A549 (cell line): ENCODE measurements at regions of chr19 and their contacts with region 1.

Region 1: GRCh38 chr19:38964738-38965137 is 10.8 kb downstream of the FBXO17 start:
- DNase-seq: no peak
- ATAC-seq: no peak
- H3K4me3 ChIP-seq: no peak overlapping the region
- H3K27ac ChIP-seq: no peak overlapping the region
- H3K4me1 ChIP-seq: peaks cover 21% of the 10 kb centered on the region
- CTCF ChIP-seq: no peak
- EP300 ChIP-seq: no peak
- POLR2A ChIP-seq: no peak
- RAD21 ChIP-seq: no peak

Region 2: GRCh38 chr19:38693380-38694223 is 271.1 kb before region 1 on chr19:
- CTCF ChIA-PET with region 1: no interaction called
- POLR2A ChIA-PET with region 1: no interaction called
- DNase-seq: peak; percentile 91 to 92
- ATAC-seq: peak; percentile 10 to 54
- H3K4me3 ChIP-seq: 0 out of 3 replicates have a peak overlapping the region, but pooled peaks have one; percentile 1
- H3K27ac ChIP-seq: peak overlapping the region; percentile 93 to 94
- H3K4me1 ChIP-seq: peaks cover 100% of the 10 kb centered on the region
- CTCF ChIP-seq: no peak
- EP300 ChIP-seq: peak; percentile 55 to 84; a peak in 3 of 5 replicates
- POLR2A ChIP-seq: no peak
- RAD21 ChIP-seq: 0 out of 5 replicates have a peak, but pooled peaks of 1 of the 2 experiments have one; percentile 8

Region 3: GRCh38 chr19:38908854-38909253 is 55.9 kb before region 1 on chr19:
- CTCF ChIA-PET with region 1: no interaction called
- POLR2A ChIA-PET with region 1: no interaction called
- DNase-seq: no peak
- ATAC-seq: no peak
- H3K4me3 ChIP-seq: no peak overlapping the region
- H3K27ac ChIP-seq: no peak overlapping the region
- H3K4me1 ChIP-seq: peaks cover 10% of the 10 kb centered on the region
- CTCF ChIP-seq: no peak
- EP300 ChIP-seq: no peak
- POLR2A ChIP-seq: no peak
- RAD21 ChIP-seq: no peak

Region 4: DNA sequence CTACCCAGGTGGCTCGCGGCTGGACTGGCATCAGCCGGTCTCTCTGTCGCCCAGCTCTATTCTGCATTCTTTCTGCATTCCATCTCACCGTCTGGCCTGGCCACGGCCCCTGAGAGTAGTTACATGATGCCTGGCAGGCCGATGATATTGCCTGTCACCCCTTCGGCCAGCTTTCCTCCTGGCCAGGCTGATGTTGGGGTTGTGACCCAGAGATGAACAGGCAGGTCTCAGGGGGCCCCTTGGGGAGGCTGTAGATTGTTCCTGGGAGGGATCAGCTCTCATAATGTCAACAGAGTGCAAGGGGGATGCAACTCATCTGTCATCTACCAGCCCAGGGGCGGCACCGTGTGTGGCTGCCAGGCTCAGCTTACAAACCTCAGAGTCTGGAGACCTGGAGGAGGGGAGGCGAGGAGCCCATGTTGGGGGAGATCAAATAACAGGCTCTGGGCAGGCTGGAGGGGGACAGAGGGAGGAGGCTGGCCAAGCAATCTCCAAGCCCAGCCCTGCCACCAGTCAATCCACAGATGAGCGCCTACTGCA is 24.4 kb after region 1 on chr19:
- CTCF ChIA-PET with region 1: interaction called, 344 read pairs
- POLR2A ChIA-PET with region 1: no interaction called
- DNase-seq: peak in 1 of 2 experiments; percentile 55
- ATAC-seq: peak; percentile 72 to 76
- H3K4me3 ChIP-seq: no peak overlapping the region
- H3K27ac ChIP-seq: peak overlapping the region; percentile 21 to 71; a peak in 3 of 6 replicates
- H3K4me1 ChIP-seq: peaks cover 37% of the 10 kb centered on the region
- CTCF ChIP-seq: no peak
- EP300 ChIP-seq: no peak
- POLR2A ChIP-seq: no peak
- RAD21 ChIP-seq: no peak

Region 5: GRCh38 chr19:39070888-39071287 is 106.2 kb after region 1 on chr19:
- CTCF ChIA-PET with region 1: interaction called, 23 read pairs
- POLR2A ChIA-PET with region 1: no interaction called
- DNase-seq: peak in 1 of 2 experiments; percentile 64
- ATAC-seq: peak; percentile 26 to 45; a peak in 4 of 6 replicates
- H3K4me3 ChIP-seq: no peak overlapping the region
- H3K27ac ChIP-seq: peak overlapping the region; percentile 60 to 72; a peak in 5 of 6 replicates
- H3K4me1 ChIP-seq: peaks cover 40% of the 10 kb centered on the region
- CTCF ChIP-seq: no peak
- EP300 ChIP-seq: peak in 1 of 2 experiments; percentile 48; a peak in 2 of 5 replicates
- POLR2A ChIP-seq: no peak
- RAD21 ChIP-seq: no peak

Region 6: GRCh38 chr19:39104186-39104596 is 139.5 kb after region 1 on chr19:
- CTCF ChIA-PET with region 1: interaction called, 12 read pairs
- POLR2A ChIA-PET with region 1: no interaction called
- DNase-seq: no peak
- ATAC-seq: no peak
- H3K4me3 ChIP-seq: no peak overlapping the region
- H3K27ac ChIP-seq: peak overlapping the region in 1 of 2 experiments; percentile 33; a peak in 3 of 6 replicates
- H3K4me1 ChIP-seq: peaks cover 12% of the 10 kb centered on the region; the same call in 2 of the 3 replicates
- CTCF ChIP-seq: no peak
- EP300 ChIP-seq: no peak
- POLR2A ChIP-seq: no peak
- RAD21 ChIP-seq: no peak

Region 7: DNA sequence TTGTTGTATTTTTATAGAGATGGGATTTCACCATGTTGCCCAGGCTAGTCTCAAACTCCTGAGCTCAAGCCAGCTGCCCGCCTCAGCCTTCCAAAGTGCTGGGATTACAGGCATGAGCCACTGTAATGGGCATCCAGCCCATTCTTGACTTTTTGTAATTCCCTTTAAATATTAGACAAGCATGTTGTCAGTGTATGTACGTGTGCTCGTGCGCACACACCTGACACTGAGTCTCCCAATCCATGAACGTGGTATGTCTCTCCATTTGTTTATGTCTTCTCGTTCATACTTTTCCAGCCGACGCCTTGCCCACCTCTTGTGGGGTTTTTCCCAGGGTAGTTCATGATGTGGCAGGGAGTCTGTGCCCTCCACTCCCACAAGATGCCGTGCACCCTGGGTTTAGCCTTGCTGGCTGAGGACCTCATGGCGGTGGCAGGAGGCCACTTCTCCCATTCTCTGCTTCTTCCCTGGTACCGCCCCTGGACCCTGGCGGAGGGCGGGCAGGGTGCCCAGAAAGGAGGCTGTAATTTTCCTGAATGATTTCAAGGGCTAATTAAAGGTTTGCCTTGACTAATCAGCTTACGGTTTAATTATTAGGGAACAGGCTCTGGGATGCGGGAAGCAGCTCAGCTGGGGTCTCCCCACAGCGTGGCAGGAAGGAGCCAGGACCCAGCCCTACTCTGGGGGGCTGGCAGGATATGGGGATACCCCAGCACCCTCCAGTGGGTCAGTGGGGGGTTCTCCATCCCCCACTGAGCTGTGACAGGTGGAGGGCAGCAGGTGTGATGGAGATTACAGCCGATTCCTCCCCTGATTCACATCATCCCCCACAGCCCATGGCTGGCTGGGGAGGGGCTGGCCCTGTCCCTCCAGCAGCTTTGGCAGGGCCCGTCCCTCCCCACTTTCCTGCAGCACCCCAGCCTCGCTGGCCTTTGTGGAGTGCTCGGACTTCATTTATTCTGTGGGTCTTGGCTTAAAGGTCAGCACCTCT is 173.8 kb after region 1 on chr19:
- CTCF ChIA-PET with region 1: interaction called, 13 read pairs
- POLR2A ChIA-PET with region 1: no interaction called
- DNase-seq: no peak
- ATAC-seq: no peak
- H3K4me3 ChIP-seq: no peak overlapping the region
- H3K27ac ChIP-seq: peak overlapping the region in 1 of 2 experiments; percentile 64; a peak in 3 of 6 replicates
- H3K4me1 ChIP-seq: peaks cover 52% of the 10 kb centered on the region
- CTCF ChIP-seq: no peak
- EP300 ChIP-seq: no peak
- POLR2A ChIP-seq: no peak
- RAD21 ChIP-seq: no peak

Region 8: GRCh38 chr19:39187559-39187957 is 222.8 kb after region 1 on chr19:
- CTCF ChIA-PET with region 1: interaction called, 11 read pairs
- POLR2A ChIA-PET with region 1: no interaction called
- DNase-seq: no peak
- ATAC-seq: peak; percentile 35 to 45
- H3K4me3 ChIP-seq: no peak overlapping the region
- H3K27ac ChIP-seq: peak overlapping the region in 1 of 2 experiments; percentile 31; a peak in 3 of 6 replicates
- H3K4me1 ChIP-seq: peaks cover 11% of the 10 kb centered on the region; the same call in 2 of the 3 replicates
- CTCF ChIP-seq: peak; percentile 21; the same call in 2 of the 3 replicates
- EP300 ChIP-seq: no peak
- POLR2A ChIP-seq: peak; percentile 9; the same call in 1 of the 2 replicates
- RAD21 ChIP-seq: no peak; a peak in 1 of 5 replicates

Region 9: DNA sequence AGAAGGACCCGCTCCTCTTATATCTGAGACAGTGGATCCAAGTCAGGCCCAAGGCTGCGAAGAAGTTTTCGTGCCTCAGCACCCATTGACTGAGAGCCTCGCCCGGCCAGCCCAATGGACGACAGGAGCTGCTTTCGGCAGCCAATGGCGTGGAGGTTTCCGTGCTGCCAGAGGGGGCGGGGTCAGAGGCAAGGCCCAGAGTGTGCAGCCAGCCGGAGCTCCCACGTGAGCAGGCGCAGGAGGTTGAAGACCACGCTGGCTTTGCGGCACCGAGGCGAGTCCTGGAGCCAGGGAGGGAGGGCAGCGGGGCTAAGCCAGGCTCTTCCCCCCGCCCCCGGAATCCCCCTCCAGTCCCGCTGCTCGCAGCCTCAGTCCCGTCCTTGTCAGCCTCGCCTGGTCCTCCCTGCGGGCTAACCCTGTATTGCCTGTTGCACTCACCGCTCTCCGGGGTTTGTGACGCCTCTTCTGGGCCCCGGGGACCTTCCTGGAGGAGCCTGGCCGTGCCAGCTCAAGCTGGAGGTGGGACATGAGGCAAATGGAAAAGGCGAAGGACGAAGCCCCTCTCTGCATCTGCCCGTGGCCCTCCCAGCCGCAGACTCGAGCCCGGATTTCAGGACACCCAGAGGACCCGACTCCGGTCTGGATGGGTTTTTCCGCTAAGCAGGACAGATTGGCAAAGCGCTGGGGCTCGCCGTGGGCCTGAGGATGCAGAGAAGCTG is 282.4 kb after region 1 on chr19:
- CTCF ChIA-PET with region 1: no interaction called
- POLR2A ChIA-PET with region 1: no interaction called
- DNase-seq: no peak
- ATAC-seq: peak in 1 of 2 experiments; percentile 36; a peak in 3 of 6 replicates
- H3K4me3 ChIP-seq: no peak overlapping the region
- H3K27ac ChIP-seq: no peak overlapping the region
- H3K4me1 ChIP-seq: no peaks in the 10 kb centered on the region
- CTCF ChIP-seq: no peak
- EP300 ChIP-seq: no peak
- POLR2A ChIP-seq: no peak
- RAD21 ChIP-seq: no peak

Region 10: DNA sequence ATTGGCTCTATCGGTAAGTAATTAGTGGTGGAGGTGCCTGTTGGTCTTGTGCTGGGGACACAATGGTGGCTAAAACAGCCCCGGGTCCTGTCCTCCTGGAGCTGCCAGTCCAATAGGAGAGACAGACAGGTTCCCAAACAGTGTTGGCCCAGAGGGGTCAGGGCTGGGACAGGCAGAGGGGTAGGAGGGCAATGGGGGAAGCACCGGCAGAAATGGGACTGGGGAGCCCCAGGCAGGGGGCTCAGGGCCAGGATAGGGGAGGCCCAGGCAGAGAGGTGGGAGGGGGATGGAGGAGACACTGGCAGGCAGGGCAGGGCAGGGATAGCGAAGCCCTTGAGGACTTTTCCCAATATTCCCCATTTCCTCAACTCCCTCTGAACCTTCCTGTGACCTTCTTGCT is 883.7 kb after region 1 on chr19:
- CTCF ChIA-PET with region 1: no interaction called
- POLR2A ChIA-PET with region 1: no interaction called
- DNase-seq: no peak
- ATAC-seq: no peak
- H3K4me3 ChIP-seq: no peak overlapping the region
- H3K27ac ChIP-seq: no peak overlapping the region
- H3K4me1 ChIP-seq: peaks cover 33% of the 10 kb centered on the region
- CTCF ChIP-seq: no peak
- EP300 ChIP-seq: no peak
- POLR2A ChIP-seq: no peak
- RAD21 ChIP-seq: no peak